Activated T-helper 1 cell treated with anti-CD3 and anti-CD28 coated beads, Interleukin-12 subunit alpha, Interleukin-12 subunit beta, Interleukin-2, Interleukin-4 antibody, amounts not matched to agents 30 ng/mL and 10 ng/mL and 1 ng/mL, durations not matched to agents 14 hours and 24 hours and 36 hours (primary cell): ENCODE measurements at regions of chr3 and their contacts with region 1.

Region 1: GRCh38 chr3:101779047-101779821 is at the start of gene NXPE3:
- DNase-seq: peak; percentile 92
- H3K4me3 Mint-ChIP-seq: peak within 1 kb of the TSS; percentile 96
- H3K27ac Mint-ChIP-seq: peak within 1 kb of the TSS; percentile 85
- H3K4me1 Mint-ChIP-seq: peaks cover 38% of the 10 kb centered on the region
- H3K27me3 Mint-ChIP-seq: no peaks in the 10 kb centered on the region
- total RNA-seq, gene NXPE3: 17.6 and 17.8 TPM in 2 replicates

Region 2: DNA sequence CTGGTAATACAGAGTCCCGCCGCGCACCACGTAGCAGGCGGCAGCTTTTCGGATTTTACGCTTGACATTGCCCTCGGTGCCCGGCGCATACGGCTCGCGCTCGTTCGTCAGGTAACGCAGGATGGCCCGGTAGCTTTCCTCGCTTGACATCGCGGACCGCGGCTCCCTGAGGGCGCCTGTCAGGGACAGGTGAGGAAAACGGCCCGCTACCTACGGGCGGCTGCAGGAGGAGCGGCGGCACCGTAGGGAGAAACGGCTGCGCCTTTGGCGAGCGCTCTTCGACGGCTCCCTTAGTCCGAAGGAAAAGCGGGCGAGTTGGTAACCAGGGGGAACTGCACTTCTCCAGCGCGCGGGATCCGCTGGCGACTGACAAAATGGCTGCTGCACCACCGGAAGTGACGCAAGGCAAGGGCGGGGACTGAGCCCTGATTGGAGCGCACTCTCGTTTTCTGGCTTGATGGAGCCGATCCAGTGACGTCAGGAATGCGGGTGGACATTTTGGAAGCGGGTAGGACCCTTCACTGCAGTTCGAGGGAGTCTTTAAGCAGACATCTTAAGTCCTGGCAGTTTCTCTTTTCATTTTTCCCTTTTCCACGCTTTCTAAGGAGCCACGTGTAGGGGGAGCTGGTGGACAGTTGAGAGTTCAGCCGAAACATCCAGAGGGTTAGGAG is 102.3 kb before region 1 on chr3 and contains the start of gene ZBTB11:
- intact Hi-C with region 1: loop called (anchors 1 kb)
- DNase-seq: peak; percentile 99
- H3K4me3 Mint-ChIP-seq: peak within 1 kb of the TSS; percentile 96
- H3K27ac Mint-ChIP-seq: peak within 1 kb of the TSS; percentile 97
- H3K4me1 Mint-ChIP-seq: peaks cover 56% of the 10 kb centered on the region
- H3K27me3 Mint-ChIP-seq: no peaks in the 10 kb centered on the region
- total RNA-seq, gene ZBTB11: 29.0 and 31.9 TPM in 2 replicates

Region 3: GRCh38 chr3:101685870-101686412 is 93.3 kb before region 1 on chr3:
- intact Hi-C with region 1: loop called (anchors 1 kb)
- DNase-seq: no peak
- H3K4me3 Mint-ChIP-seq: peak overlapping the region; percentile 99
- H3K27ac Mint-ChIP-seq: peak overlapping the region; percentile 97
- H3K4me1 Mint-ChIP-seq: peaks cover 29% of the 10 kb centered on the region
- H3K27me3 Mint-ChIP-seq: no peaks in the 10 kb centered on the region

Region 4: GRCh38 chr3:101724329-101725193 is 54.7 kb before region 1 on chr3 and contains the start of gene CEP97:
- intact Hi-C with region 1: loop called (anchors 1 kb)
- DNase-seq: peak; percentile 85
- H3K4me3 Mint-ChIP-seq: peak within 1 kb of the TSS; percentile 94
- H3K27ac Mint-ChIP-seq: peak within 1 kb of the TSS; percentile 96
- H3K4me1 Mint-ChIP-seq: peaks cover 54% of the 10 kb centered on the region
- H3K27me3 Mint-ChIP-seq: no peaks in the 10 kb centered on the region
- total RNA-seq, gene CEP97: 20.2 and 20.6 TPM in 2 replicates

Region 5: GRCh38 chr3:101791778-101792177 is 12.5 kb after region 1 on chr3:
- intact Hi-C with region 1: no loop called
- DNase-seq: no peak
- H3K4me3 Mint-ChIP-seq: no peak overlapping the region
- H3K27ac Mint-ChIP-seq: no peak overlapping the region
- H3K4me1 Mint-ChIP-seq: peaks cover 18% of the 10 kb centered on the region
- H3K27me3 Mint-ChIP-seq: no peaks in the 10 kb centered on the region

Region 6: DNA sequence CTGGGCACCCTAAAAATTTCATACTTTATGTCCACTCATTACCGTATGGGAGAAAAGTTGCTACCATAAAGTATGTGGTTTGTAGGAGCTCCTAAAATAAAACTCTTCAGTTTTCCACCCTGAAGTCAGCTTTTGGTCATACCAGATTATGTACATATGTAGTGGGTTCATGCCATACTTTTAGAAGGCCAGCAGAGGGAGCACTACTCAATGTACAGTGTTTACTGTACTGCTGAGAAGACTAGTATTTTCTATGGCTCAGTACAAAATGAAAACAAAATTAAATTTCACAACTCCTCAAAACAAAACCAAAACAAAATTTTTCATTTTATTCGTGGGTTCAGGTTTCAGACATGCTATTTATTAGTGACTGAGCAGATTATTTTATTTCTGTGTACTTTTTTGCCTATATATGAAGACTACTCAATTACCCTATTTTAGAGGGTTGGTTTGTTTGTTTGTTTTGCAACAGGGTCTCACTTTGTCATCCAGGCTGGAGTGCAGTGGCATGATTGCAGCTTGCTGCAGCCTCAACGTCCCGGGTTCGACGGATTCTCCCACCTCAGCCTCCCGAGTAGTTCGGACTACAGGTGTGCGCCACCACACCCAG is 24.0 kb after region 1 on chr3:
- intact Hi-C with region 1: loop called (anchors 1 kb)
- DNase-seq: peak; percentile 48
- H3K4me3 Mint-ChIP-seq: no peak overlapping the region
- H3K27ac Mint-ChIP-seq: no peak overlapping the region
- H3K4me1 Mint-ChIP-seq: peaks cover 22% of the 10 kb centered on the region
- H3K27me3 Mint-ChIP-seq: no peaks in the 10 kb centered on the region